GM23248 (cell line): ENCODE measurements at regions of chr20 and their contacts with region 1.

Region 1: DNA sequence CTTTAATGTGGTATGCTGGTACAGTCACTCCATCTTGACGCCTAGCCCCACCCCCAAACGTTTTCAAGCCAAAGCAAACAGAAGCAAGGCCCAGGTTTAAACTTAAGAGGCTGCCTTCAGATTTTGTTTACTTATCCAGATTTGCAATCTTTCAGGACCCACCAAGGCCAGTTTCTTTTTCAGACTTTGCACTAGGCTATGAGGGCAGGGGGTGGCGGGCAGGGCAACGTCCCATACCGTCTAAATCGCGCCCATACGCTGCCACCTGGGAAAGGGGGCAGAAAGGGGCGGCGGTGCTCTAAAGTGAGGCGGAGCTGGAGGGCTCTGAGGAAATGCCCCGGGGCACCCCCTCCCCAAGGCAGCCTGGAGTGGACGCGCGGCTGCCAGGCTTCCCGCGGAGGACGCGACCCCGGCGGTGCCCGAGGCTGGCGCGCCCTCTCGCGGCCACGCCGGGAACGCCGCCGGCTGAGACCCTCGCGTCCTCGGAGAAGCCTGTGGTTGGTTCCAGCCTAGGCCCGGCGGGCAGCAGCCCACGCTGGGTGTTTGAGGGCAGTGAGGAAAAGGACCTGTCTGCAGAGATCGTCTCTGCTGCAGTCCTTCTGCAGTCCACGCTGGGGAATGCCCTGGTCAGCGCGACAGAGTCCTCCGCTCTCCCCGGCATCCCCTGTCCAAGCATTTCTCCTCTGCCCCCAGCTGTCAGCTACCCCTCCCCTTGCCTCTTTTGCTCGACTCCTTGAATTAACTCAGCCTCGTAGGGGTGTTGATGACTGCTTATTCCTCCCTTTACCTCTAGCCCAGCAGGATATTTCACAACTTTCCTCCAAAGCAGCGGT is 129.2 kb upstream of the PRND start:
- DNase-seq: peak; percentile 64
- H3K4me3 ChIP-seq: peak overlapping the region; percentile 78
- H3K27ac ChIP-seq: no peak overlapping the region
- H3K4me1 ChIP-seq: no peaks in the 10 kb centered on the region
- H3K27me3 ChIP-seq: no peaks in the 10 kb centered on the region

Region 2: GRCh38 chr20:4256874-4257273 is 335.7 kb before region 1 on chr20:
- in situ Hi-C with region 1: loop called (anchors 10 kb)
- DNase-seq: peak; percentile 49
- H3K4me3 ChIP-seq: no peak overlapping the region
- H3K27ac ChIP-seq: no peak overlapping the region
- H3K4me1 ChIP-seq: peaks cover 16% of the 10 kb centered on the region; the same call in 1 of the 2 replicates
- H3K27me3 ChIP-seq: no peaks in the 10 kb centered on the region